ENCODE measurements at regions of chr14 and their contacts with region 1.

Region 1: DNA sequence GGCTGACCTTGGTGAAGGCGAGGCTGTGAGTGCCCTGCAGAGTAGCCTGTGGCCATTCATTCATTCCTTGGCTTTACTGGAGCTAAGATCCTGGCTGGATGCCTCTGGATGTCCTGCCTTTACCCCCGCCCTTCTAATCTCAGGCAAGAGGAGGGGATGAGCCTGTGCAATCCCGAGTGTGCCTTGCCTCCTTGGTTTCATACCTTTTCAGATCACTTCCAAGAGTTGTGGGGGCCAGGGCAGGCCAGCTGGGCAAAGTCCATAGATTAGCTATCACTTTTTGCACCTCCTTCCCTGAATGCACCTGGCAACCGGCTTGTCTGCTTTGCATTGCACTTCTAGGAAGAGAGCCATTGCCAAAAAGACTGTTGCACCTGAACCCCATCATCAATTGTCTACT is 1.5 kb downstream of the VRTN start:
- DNase-seq: no peak
- H3K4me3 ChIP-seq: peak overlapping the region; percentile 87 to 98 (median 90)
- H3K27ac ChIP-seq: peak overlapping the region; percentile 92; the same call in 1 of the 2 replicates
- H3K4me1 ChIP-seq: peaks cover 4 to 20% (median 12%) of the 10 kb centered on the region in 4 experiments
- H3K27me3 ChIP-seq: no peaks in the 10 kb centered on the region
- CTCF ChIP-seq: no peak
- EP300 ChIP-seq: no peak
- POLR2A ChIP-seq: no peak
- RAD21 ChIP-seq: no peak

Region 2: DNA sequence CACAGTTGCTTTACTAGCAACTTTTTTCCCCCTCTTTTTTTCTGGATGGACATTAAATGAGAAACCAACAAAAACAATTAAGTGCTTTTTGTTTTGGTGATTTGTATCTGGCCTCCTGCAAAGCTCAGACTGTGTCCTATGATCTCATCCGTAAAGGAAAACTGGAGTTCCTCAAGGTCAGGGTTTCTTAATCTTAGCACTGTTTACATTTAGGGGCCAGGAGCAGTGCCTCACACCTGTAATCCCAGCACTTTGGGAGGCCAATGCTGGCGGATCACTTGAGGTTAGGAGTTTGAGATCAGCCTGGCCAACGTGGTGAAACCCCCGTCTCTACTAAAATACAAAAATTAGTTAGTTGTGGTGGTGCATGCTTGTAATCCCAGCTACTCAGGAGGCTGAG is 358.7 kb before region 1 on chr14:
- CTCF ChIA-PET with region 1: no interaction called
- POLR2A ChIA-PET with region 1: no interaction called
- DNase-seq: no peak
- H3K4me3 ChIP-seq: no peak overlapping the region
- H3K27ac ChIP-seq: no peak overlapping the region
- H3K4me1 ChIP-seq: no peaks in the 10 kb centered on the region
- H3K27me3 ChIP-seq: no peaks in the 10 kb centered on the region
- CTCF ChIP-seq: no peak
- EP300 ChIP-seq: no peak
- POLR2A ChIP-seq: no peak
- RAD21 ChIP-seq: no peak

Region 3: GRCh38 chr14:74105381-74105780 is 244.4 kb before region 1 on chr14:
- CTCF ChIA-PET with region 1: no interaction called
- POLR2A ChIA-PET with region 1: no interaction called
- DNase-seq: no peak
- H3K4me3 ChIP-seq: no peak overlapping the region
- H3K27ac ChIP-seq: no peak overlapping the region
- H3K4me1 ChIP-seq: no peaks in the 10 kb centered on the region
- H3K27me3 ChIP-seq: no peaks in the 10 kb centered on the region
- CTCF ChIP-seq: no peak
- EP300 ChIP-seq: no peak
- POLR2A ChIP-seq: no peak
- RAD21 ChIP-seq: no peak

Region 4: GRCh38 chr14:74302634-74303577 is 46.9 kb before region 1 on chr14 and contains the start of gene ABCD4:
- CTCF ChIA-PET with region 1: interaction called, 4 read pairs
- POLR2A ChIA-PET with region 1: interaction called, 21 read pairs
- DNase-seq: peak; percentile 90 to 99
- H3K4me3 ChIP-seq: peak within 1 kb of the TSS; percentile 76 to 99 (median 80)
- H3K27ac ChIP-seq: peak within 1 kb of the TSS; percentile 46; the same call in 1 of the 2 replicates
- H3K4me1 ChIP-seq: no peaks in the 10 kb centered on the region
- H3K27me3 ChIP-seq: no peaks in the 10 kb centered on the region
- CTCF ChIP-seq: peak; percentile 57 to 70 (median 63)
- EP300 ChIP-seq: 0 out of 3 replicates have a peak, but pooled peaks of 1 of the 2 experiments have one; percentile 60
- POLR2A ChIP-seq: peak; percentile 98 to 100
- RAD21 ChIP-seq: 0 out of 4 replicates have a peak, but pooled peaks of 1 of the 2 experiments have one; percentile 8
- total RNA-seq, gene ABCD4: 84.8 and 97.7 TPM in 2 replicates

Region 5: DNA sequence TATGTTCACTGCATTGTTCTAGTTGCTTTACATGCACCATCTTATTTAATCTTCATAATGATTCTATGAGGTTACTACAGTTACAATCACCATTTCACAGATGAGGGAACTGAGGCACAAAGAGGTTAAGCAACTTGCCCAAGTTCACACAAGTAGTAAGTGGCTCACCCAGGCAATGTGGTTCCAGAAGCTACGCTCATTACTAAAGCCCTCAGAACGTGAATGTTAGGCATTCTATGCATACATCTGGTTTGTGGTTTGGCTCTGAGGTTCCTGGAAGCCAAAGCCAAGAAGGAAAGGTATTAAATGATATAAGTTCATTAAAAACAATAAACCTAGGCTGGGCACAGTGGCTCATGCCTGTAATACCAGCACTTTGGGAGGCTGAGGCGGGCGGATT is 15.8 kb before region 1 on chr14:
- CTCF ChIA-PET with region 1: interaction called, 6 read pairs
- POLR2A ChIA-PET with region 1: interaction called, 282 read pairs
- DNase-seq: no peak
- H3K4me3 ChIP-seq: no peak overlapping the region
- H3K27ac ChIP-seq: no peak overlapping the region
- H3K4me1 ChIP-seq: no peaks in the 10 kb centered on the region; a peak in 2 of 7 replicates
- H3K27me3 ChIP-seq: no peaks in the 10 kb centered on the region
- CTCF ChIP-seq: no peak
- EP300 ChIP-seq: no peak
- POLR2A ChIP-seq: no peak
- RAD21 ChIP-seq: no peak

Region 6: DNA sequence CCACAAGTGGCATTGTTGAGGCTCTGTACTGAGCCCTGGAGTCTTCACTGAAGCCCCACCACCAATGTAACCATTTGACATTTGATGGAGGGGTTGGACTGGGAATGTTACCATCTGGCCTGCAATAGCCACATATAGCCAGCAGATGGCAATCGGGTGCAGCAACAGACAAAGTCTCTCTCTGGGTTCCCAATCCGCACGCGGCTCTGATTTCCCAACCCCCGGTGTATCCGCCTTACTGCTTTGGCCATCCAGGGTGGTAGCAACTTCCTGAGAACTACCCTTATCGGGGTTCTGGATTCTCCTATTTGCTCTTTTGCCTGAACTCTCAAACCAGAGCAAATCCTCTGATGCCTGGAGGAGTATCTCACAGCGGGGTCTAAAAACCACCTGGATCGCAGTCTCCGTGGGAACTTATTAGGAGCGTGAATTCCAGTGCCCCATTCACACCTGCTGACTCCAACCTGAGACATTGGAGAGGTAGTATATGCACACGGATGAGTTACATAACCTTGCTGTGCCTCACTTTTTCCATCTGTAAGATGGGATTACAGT is 12.7 kb after region 1 on chr14:
- CTCF ChIA-PET with region 1: interaction called, 16 read pairs
- POLR2A ChIA-PET with region 1: interaction called, 200 read pairs
- DNase-seq: peak; percentile 77 to 96
- H3K4me3 ChIP-seq: no peak overlapping the region
- H3K27ac ChIP-seq: no peak overlapping the region
- H3K4me1 ChIP-seq: peaks cover 11 to 31% (median 14%) of the 10 kb centered on the region in 4 experiments
- H3K27me3 ChIP-seq: no peaks in the 10 kb centered on the region
- CTCF ChIP-seq: peak; percentile 85 to 99 (median 92)
- EP300 ChIP-seq: no peak; a peak in 1 of 3 replicates
- POLR2A ChIP-seq: peak in 1 of 2 experiments; percentile 40; a peak in 1 of 3 replicates
- RAD21 ChIP-seq: peak; percentile 96 to 97